Caco-2 (cell line): ENCODE measurements at regions of chr14 and their contacts with region 1.

Region 1: DNA sequence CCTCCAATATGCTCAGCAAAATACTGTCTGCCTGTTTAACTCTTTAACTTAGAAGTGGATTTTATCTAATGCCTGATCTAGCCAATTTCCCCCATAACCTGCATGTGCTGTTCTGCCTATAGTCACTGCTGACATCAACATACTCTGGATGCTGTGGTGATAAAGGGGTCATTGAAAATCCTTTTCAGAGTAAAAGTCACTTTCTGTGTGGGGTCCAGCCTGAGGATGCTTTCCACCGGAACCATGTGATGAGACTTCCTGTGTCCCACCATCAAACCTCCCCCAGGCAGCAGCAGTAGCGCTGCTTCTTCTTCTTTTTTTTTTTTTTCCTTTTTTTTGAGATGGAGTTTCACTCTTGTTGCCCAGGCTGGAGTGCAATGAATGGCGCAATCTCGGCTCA is 607.0 kb downstream of the BCL11B start:
- DNase-seq: no peak
- H3K4me3 ChIP-seq: no peak overlapping the region
- H3K4me3 Mint-ChIP-seq: no peak overlapping the region
- H3K27ac Mint-ChIP-seq: no peak overlapping the region
- H3K4me1 ChIP-seq: no peaks in the 10 kb centered on the region
- H3K4me1 Mint-ChIP-seq: no peaks in the 10 kb centered on the region
- H3K27me3 ChIP-seq: no peaks in the 10 kb centered on the region
- H3K27me3 Mint-ChIP-seq: no peaks in the 10 kb centered on the region
- CTCF ChIP-seq: no peak

Region 2: DNA sequence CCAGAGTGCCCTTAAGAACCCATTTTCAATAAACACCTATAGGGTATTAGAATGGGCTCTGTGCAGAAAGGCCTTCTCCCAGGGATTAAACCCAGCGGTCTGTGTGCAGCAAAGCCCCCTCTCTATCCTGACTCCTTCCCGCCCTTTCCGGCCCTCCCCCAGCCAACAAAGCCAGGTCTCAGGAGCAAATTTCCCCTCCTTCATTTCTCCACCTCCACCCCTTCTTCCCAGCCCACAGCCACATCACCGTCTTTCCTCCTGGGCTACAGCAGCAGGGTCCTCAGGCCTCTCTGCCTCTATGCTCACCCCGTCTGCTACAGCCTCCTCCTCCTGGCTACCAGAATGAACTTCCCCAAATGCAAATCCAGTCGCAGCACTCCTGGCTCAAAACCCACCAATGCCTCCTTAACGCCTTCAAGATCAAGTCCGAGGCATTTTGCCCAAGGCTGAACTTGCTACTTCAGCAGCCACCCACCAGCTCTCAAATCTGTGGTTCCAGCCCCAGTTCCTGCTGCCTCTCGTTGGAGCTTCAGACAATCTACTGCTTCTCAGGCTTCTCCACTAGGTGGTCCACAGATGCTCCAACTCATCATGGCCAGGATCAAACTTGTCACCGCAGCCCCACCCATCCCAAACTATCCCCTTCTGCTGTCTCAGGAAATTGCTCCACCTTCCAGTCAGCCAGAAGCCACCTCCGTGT is 472.1 kb after region 1 on chr14:
- CTCF ChIA-PET with region 1: no interaction called
- POLR2A ChIA-PET with region 1: interaction called, 19 read pairs
- intact Hi-C with region 1: no loop called
- DNase-seq: no peak
- H3K4me3 ChIP-seq: no peak overlapping the region
- H3K4me3 Mint-ChIP-seq: no peak overlapping the region
- H3K27ac Mint-ChIP-seq: no peak overlapping the region
- H3K4me1 ChIP-seq: no peaks in the 10 kb centered on the region
- H3K4me1 Mint-ChIP-seq: no peaks in the 10 kb centered on the region
- H3K27me3 ChIP-seq: no peaks in the 10 kb centered on the region
- H3K27me3 Mint-ChIP-seq: peaks cover 3% of the 10 kb centered on the region
- CTCF ChIP-seq: no peak